Transverse colon (tissue), 4 donors: ENCODE measurements at regions of chr1 and their contacts with region 1.

Region 1: GRCh38 chr1:4018466-4019146 is 118.5 kb upstream of the C1orf174 start:
- DNase-seq: no peak
- H3K4me3 ChIP-seq: no peak overlapping the region
- H3K27ac ChIP-seq: no peak overlapping the region
- H3K4me1 ChIP-seq: no peaks in the 10 kb centered on the region
- H3K27me3 ChIP-seq: no peaks in the 10 kb centered on the region
- CTCF ChIP-seq: no peak
- EP300 ChIP-seq: no peak
- POLR2A ChIP-seq: no peak

Region 2: DNA sequence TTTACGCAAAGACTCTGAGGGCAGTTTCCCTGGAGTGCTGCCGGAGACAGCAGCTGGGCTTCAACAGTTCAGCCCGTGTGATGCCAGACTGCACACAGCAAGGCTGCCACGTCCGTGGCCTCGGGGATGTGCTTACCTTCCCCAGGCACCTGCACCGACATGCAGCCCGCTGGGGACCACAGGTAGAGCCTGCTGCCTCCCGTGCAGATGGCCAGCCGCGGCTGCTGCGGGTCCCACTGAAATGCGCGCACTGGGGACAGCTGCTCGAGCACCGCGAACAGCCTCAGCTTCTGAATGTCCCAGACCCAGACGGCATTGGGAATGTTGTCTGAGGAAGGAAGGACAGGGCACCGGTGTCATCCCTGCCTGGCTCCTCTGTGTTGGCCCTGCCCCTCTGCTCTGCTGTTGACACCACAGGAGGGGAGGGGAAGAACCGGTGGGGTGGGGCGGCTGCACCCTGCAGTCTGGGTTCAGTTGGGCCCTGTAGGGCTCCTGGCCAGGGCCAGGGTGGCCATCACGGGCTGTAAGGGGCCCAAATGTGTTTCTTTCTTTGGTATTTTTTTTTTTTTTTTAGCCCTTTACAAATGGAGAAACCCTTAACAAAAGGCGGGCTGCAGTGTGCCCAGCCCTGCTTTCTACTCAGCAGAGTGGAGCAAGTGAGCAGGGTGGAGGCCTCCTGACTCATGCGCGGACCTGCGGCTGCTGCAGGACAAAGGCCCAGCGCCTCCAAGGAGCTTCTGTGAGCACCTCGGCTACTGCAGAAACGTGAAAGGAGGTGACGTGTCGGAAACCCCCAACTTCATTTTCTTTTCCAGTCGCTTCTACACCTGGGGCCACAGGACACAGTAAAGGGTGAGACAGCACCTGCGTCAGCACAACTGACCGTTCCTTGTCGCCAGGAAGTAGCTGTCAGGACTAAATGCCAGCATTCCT is 387.0 kb before region 1 on chr1:
- in situ Hi-C with region 1: no loop called
- intact Hi-C with region 1: no loop called
- DNase-seq: no peak
- H3K4me3 ChIP-seq: no peak overlapping the region
- H3K27ac ChIP-seq: no peak overlapping the region
- H3K4me1 ChIP-seq: no peaks in the 10 kb centered on the region
- H3K27me3 ChIP-seq: no peaks in the 10 kb centered on the region
- CTCF ChIP-seq: no peak
- EP300 ChIP-seq: no peak
- POLR2A ChIP-seq: no peak

Region 3: DNA sequence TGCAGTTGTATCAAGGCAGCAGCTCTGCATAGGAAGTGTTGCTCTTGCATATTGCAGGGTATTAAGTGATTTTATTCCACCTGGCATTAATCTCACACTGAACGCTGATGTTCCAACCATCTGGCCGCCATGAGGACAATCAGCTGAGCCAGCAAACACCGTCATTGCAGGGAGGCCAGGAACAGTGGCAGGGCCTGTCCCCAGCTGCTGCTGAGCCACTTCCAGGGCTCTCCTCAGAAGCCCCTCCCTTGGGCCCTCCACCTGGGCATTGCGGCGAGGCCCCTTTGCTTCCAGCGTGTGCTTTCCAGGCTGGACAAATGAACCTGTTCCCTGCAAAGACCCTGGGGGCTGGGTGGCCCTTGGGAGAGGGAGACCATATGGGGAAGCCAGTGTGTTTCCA is 53.0 kb after region 1 on chr1:
- in situ Hi-C with region 1: loop called in 1 of 4 experiments (anchors 10 kb)
- intact Hi-C with region 1: no loop called
- DNase-seq: no peak
- H3K4me3 ChIP-seq: no peak overlapping the region
- H3K27ac ChIP-seq: no peak overlapping the region
- H3K4me1 ChIP-seq: no peaks in the 10 kb centered on the region
- H3K27me3 ChIP-seq: peaks cover 7% of the 10 kb centered on the region
- CTCF ChIP-seq: no peak
- EP300 ChIP-seq: no peak
- POLR2A ChIP-seq: no peak

Region 4: DNA sequence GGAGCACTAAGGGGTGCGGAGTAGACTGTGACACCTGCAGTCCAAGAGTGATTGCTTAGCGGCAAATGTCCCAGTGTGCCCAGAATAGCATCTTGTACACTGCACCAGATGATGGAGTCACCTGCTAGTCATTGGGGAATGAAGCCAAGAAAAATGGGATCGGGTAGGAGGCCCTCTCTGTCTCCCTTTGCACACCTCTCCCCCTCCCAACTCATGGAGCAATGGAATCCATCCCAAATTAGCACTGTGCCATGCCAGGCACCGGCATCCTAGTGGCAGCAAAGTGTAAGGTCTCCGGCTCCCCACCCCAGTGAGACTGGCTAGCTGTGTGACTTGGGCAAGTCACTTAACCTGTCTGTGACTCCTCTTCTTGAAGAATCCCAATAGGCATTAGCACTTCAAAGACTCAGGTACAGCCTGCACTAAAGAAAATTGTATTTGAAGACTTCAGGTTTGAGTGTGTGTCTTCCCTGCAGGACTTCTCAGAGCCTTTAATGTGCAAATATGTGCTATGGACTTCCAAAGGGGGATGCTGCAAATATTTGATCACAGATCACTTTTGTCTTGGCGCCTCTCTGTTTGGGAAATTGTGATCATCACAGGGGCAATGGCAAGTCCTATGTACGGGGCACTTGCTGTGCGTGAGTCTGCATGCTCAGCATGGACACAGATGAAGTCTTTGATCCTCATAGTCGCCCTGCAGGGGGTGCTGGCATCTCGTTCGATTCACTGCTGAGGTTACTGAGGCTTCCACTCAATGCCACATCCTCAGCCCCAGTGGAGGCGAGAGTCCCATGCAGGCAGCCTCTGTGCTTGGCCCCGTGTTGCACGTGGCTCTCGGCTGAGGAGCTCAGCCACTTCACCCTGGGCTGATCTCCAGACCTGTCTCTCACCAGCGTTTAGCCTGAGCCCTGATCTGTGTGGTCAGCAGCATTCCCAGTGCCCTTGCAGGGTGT is 154.3 kb after region 1 on chr1:
- in situ Hi-C with region 1: no loop called
- intact Hi-C with region 1: no loop called
- DNase-seq: no peak
- H3K4me3 ChIP-seq: no peak overlapping the region
- H3K27ac ChIP-seq: no peak overlapping the region
- H3K4me1 ChIP-seq: no peaks in the 10 kb centered on the region
- H3K27me3 ChIP-seq: no peaks in the 10 kb centered on the region
- CTCF ChIP-seq: no peak
- EP300 ChIP-seq: no peak
- POLR2A ChIP-seq: no peak